ENCODE measurements at regions of chr22 and their contacts with region 1.

Region 1: GRCh38 chr22:20156611-20157429 is 6.0 kb upstream of the CCDC188 start:
- DNase-seq: peak; percentile 86
- H3K4me3 ChIP-seq: no peak overlapping the region
- H3K27ac ChIP-seq: no peak overlapping the region
- H3K4me1 ChIP-seq: no peaks in the 10 kb centered on the region
- H3K27me3 ChIP-seq: no peaks in the 10 kb centered on the region
- CTCF ChIP-seq: peak; percentile 100

Region 2: DNA sequence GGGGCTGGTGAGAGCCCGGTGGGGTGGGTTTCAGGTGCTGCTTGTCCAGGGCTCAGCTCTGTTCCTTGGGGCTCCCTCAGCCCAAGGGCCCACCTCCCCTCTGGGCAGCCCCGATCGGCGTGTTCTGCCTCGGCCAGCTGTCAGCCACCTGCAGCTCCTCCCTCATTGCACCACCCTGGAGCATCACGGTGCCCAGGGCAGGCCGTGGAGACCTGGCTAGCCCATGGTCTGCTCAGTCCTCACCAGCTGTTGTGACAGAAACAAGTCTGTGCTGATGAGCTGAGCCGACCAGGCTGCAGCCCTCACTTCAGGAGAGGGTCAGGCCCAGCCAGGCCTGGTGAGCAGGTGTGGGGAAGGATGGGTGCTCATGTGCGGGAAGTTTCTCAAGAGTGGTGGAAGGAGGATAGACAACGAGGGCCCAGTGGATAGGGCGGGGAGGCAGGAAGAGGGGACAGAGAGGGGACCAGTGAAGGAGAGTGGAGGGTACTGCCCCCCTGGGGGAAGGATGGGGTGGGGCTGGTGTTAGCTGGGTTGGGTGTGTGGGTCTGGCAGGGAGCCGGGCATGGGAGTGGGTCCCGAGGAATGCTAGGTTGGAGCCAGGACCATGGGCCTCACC is 127.8 kb after region 1 on chr22:
- intact Hi-C with region 1: loop called (anchors 1 kb)
- DNase-seq: no peak
- H3K4me3 ChIP-seq: no peak overlapping the region
- H3K27ac ChIP-seq: no peak overlapping the region
- H3K4me1 ChIP-seq: no peaks in the 10 kb centered on the region
- H3K27me3 ChIP-seq: no peaks in the 10 kb centered on the region
- CTCF ChIP-seq: no peak

Region 3: DNA sequence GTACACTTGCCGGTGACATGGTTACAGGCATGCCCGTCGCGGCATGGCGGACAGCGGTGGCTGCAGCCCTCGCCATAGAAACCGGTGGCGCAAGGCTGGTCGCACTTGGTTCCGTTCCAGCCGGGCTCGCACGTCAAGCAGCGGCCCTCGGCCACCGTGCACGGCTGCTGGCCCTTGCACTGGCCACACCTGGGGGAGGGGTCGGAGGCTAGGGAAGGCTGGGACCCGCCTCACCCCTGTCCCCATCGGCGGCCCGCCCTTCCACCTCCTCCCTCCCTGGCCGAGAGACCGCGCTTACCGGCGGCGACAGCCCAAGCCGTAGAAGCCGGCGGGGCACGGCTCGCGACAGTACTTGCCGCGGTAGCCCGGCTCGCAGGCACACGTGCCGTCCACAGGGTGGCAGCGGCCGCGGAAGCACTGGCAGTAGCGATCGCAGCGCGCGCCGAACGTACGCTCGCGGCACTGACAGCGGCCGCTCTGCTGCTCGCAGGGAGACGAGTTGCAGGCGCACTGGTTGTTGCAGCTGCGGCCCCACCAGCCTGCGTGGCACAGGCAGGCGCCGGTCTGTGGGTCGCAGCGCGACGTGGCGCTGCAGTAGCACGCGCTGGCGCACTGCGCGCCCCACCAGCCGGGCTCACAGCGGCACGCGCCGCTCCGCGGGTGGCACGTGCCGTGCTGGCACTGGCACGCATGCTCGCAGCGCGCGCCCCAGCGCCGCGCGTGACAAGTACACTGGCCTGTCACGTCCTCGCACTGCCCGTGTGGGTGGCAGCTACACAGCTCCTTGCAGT is 274.1 kb after region 1 on chr22:
- intact Hi-C with region 1: no loop called
- DNase-seq: peak; percentile 40
- H3K4me3 ChIP-seq: peak overlapping the region; percentile 27
- H3K27ac ChIP-seq: no peak overlapping the region
- H3K4me1 ChIP-seq: peaks cover 25% of the 10 kb centered on the region
- H3K27me3 ChIP-seq: peaks cover 80% of the 10 kb centered on the region
- CTCF ChIP-seq: peak; percentile 23

Region 4: GRCh38 chr22:20456064-20456721 is 299.4 kb after region 1 on chr22:
- intact Hi-C with region 1: no loop called
- DNase-seq: peak; percentile 62
- H3K4me3 ChIP-seq: no peak overlapping the region
- H3K27ac ChIP-seq: no peak overlapping the region
- H3K4me1 ChIP-seq: no peaks in the 10 kb centered on the region
- H3K27me3 ChIP-seq: no peaks in the 10 kb centered on the region
- CTCF ChIP-seq: peak; percentile 93

Measured in colonic mucosa (tissue), 4 donors.